IMR-90 (cell line): ENCODE measurements at regions of chr11 and their contacts with region 1.

Region 1: DNA sequence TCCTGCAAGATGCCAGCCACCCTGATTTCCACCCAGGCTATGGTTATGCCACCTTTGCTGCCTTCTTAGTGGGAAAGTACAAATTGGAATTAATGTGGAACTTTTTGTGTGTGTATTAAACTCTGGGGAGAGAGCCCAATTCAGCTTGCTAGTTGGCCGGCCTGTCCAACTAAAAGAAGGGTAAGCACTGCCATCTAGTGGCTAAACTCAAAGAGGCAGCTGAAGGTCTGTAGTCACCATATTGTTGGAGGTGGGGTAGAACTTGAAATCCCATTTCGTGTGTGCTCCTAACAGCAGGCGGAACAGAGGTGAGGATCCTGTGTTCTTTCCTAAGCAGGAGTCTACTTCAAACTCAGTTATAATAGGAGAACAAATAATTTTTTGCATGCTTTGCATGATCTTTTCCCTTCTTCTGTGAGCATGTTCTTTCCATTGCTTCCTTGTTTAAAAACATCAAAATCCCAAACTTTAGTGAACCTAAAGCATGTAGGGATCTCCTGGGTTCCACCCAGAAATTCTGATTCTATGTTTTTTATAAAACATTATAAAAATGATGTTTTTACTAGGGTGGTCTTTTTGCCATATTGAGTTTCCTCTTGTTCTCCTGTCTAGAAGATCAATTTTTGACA is 138.8 kb upstream of the SORL1-AS1 start:
- DNase-seq: peak; percentile 80
- ATAC-seq: peak; percentile 59
- H3K4me3 ChIP-seq: no peak overlapping the region
- H3K27ac ChIP-seq: no peak overlapping the region
- H3K4me1 ChIP-seq: peaks cover 17% of the 10 kb centered on the region
- H3K27me3 ChIP-seq: no peaks in the 10 kb centered on the region
- CTCF ChIP-seq: peak; percentile 93
- POLR2A ChIP-seq: peak; percentile 41; the same call in 1 of the 2 replicates
- RAD21 ChIP-seq: peak; percentile 96

Region 2: DNA sequence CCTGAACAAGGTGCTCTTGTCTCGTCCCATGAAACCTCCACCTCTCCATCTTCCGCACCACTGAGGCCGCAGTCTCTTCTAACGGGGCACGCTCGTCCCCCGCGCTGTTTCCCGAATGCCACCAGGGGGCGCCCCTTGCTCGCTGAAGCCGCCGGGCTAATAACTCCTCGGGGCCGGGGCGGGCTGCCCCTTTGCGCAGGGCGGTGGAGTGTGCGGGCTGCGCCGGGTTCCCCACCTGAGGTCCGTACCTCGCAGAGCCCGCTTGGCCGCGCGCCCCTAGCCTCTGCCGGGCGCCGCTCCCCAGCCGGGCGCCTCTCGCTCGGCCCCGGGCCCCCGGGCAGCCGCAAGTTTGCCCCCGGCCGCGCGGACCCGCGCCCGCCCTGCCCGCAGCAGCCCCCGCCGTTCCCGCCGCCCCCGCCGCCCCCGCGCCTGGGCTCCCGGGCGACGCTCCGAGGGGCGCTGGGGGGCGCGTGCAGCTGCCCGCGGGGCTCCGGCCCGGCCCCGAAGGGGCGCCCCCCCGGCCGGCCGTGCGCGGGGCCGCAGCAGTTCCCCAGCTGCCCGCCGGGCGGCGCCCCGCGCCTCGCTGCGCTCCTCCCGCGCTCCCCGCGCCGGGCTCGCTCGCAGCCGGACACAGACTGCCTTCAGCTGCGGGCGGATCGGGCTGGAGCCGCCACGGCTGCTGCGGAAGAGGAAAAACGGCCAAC is 1080.3 kb before region 1 on chr11 and contains the start of gene GRIK4:
- CTCF ChIA-PET with region 1: no interaction called
- POLR2A ChIA-PET with region 1: no interaction called
- dilution Hi-C with region 1: no loop called
- in situ Hi-C with region 1: no loop called
- intact Hi-C with region 1: loop called (anchors 2 kb)
- DNase-seq: peak; percentile 57
- ATAC-seq: peak; percentile 94
- H3K4me3 ChIP-seq: peak within 1 kb of the TSS; percentile 47
- H3K27ac ChIP-seq: no peak within 1 kb of the TSS
- H3K4me1 ChIP-seq: peaks cover 2% of the 10 kb centered on the region; the same call in 1 of the 2 replicates
- H3K27me3 ChIP-seq: peaks cover 4% of the 10 kb centered on the region
- CTCF ChIP-seq: peak; percentile 97
- POLR2A ChIP-seq: no peak
- RAD21 ChIP-seq: peak; percentile 97
- total RNA-seq, gene GRIK4: under 0.01 and 0.18 TPM in 2 replicates

Region 3: DNA sequence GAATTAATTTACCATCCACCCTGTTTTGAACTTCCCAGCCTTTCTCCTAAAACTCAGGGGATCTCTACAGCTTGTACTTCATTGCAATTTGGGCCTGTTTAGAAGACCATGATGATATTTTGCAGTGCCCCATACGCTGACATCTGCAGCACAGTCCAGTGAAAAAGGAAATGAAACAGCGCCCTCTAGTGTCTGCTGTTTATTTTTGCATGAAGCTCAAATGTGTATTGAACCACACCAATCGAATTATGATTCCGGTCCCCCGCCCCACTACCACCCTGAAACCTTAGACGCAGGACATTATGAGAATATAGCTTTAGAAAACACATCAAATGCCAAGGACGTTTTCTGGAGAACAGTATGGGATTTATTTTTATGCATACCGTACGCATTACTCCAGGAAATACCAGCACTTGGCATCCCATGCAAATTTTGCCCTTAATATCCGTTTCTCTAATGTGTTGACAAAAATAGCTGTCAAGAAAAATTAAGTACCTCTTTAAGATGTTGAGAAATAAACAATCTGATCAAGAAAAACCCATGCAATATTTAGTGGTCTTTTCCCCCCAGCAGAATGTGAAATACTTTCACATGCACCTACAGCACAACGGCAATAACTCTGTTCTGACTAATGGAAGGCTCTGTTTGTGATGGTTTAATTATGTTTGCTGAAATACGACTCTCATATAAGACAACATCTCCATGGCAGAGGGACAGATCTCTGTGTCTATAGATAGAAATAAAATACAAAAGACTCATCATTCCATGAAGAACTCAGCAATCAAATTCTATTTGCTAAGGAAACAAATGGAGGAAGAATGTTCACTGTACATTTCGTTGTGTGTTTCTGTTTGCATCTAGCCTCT is 396.6 kb before region 1 on chr11:
- CTCF ChIA-PET with region 1: no interaction called
- POLR2A ChIA-PET with region 1: no interaction called
- dilution Hi-C with region 1: no loop called
- in situ Hi-C with region 1: no loop called
- intact Hi-C with region 1: loop called (anchors 2 kb)
- DNase-seq: peak; percentile 64
- ATAC-seq: peak; percentile 98
- H3K4me3 ChIP-seq: no peak overlapping the region
- H3K27ac ChIP-seq: no peak overlapping the region
- H3K4me1 ChIP-seq: no peaks in the 10 kb centered on the region
- H3K27me3 ChIP-seq: peaks cover 15% of the 10 kb centered on the region
- CTCF ChIP-seq: peak; percentile 74
- POLR2A ChIP-seq: no peak
- RAD21 ChIP-seq: peak; percentile 72

Region 4: DNA sequence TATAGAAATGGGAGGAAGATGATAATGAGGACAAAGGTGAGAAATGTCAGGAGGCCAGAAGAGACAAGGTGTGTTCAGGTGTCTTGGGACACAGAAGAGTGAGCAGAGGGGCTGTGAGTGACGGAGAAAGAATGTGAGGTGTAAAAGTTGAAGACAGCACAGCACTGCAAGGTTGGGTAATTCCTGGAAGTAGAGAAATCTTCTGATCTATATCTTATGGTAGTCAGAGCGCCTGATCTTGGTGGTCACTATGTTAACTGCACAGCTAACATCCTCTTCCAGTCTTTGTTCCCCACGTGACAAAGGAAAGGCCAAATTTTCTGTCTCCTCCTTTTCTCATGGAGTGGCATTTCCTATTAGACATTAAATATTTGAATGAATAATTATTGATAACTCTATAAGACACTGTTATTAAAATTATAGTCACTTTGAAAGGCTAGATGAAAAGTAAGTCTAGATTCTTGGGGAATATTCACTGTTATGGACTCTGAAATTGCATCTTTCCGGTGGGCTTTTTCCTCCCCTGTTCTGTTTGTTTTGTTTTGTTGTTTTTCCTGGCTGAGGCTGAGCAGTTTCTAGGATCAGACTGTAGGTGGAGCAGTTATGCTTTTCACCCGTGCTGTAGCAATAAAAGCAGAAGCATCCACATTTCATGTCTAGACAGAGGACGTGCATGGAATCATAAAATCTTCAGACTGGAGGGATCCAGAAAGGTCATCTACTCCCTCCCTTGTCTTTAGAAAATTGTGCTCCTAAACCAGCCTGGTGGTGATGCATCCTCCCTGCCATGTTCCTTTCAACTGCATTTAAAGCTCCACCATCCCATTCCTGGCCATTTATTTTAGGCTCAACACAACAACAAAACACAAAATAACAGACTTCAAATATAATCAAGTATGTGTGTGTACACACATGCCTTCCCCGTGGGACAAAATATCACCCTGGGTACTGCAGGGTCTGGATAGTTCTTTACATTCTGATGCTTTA is 272.4 kb before region 1 on chr11:
- CTCF ChIA-PET with region 1: interaction called, 4 read pairs
- POLR2A ChIA-PET with region 1: interaction called, 3 read pairs
- dilution Hi-C with region 1: no loop called
- in situ Hi-C with region 1: no loop called
- intact Hi-C with region 1: loop called (anchors 1 kb)
- DNase-seq: peak; percentile 56
- ATAC-seq: peak; percentile 89
- H3K4me3 ChIP-seq: no peak overlapping the region
- H3K27ac ChIP-seq: no peak overlapping the region
- H3K4me1 ChIP-seq: no peaks in the 10 kb centered on the region
- H3K27me3 ChIP-seq: peaks cover 12% of the 10 kb centered on the region
- CTCF ChIP-seq: peak; percentile 73
- POLR2A ChIP-seq: no peak
- RAD21 ChIP-seq: peak; percentile 65

Region 5: DNA sequence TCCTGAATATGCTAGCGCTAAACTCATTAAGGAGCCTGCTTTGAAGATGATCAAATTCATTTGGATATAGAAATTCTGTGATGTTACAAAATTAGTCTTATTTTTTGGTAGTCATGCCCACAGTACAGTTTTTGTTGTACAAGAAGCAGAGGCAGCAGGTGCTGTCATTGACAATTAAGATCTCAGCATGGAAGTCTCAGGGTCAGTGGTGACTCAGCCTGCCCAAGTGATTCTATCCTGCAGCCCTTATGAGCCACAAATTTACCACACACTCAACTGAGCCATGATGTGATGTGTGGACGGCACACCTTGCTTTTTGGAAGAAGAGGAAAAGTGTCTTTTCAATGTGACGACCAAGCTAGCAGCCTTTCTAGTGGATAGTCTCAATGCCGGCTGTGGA is 14.8 kb after region 1 on chr11:
- CTCF ChIA-PET with region 1: no interaction called
- POLR2A ChIA-PET with region 1: interaction called, 33 read pairs
- dilution Hi-C with region 1: no loop called
- in situ Hi-C with region 1: no loop called
- intact Hi-C with region 1: no loop called
- DNase-seq: peak; percentile 23
- ATAC-seq: no peak
- H3K4me3 ChIP-seq: no peak overlapping the region
- H3K27ac ChIP-seq: no peak overlapping the region
- H3K4me1 ChIP-seq: peaks cover 4% of the 10 kb centered on the region; the same call in 1 of the 2 replicates
- H3K27me3 ChIP-seq: no peaks in the 10 kb centered on the region
- CTCF ChIP-seq: no peak
- POLR2A ChIP-seq: no peak
- RAD21 ChIP-seq: no peak

Region 6: DNA sequence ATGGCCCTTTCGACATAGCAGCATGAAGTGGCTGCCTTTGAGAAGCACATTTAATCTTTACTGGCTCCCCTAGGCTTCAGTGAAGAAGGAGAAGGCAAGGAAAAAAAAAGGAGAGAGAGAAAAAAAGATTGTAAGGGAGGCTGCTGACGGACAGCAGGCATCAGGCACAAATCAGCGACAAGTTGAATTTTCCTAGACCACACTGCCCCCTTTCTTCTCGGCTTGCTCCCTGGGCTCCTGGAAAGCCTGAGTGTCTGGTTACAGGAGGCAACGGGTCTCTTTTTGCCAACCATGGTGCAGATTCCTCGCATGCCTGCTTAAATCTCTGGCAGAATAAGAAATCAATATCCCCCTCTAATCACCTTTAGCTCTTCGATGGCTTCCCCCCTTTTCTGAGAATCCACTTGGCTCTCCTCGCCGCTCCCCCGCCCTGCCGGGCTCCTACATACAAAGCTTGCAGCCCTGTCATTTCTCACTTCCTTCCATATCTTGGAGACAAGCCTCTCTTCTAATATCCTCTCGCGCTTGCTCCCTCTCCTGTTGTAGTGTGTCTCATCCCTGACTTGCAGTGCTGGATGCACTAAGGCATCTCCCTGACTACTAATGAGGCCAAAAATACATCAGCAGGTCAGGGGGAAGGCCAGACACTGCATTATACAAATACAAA is 510.2 kb after region 1 on chr11:
- CTCF ChIA-PET with region 1: no interaction called
- POLR2A ChIA-PET with region 1: no interaction called
- dilution Hi-C with region 1: no loop called
- in situ Hi-C with region 1: no loop called
- intact Hi-C with region 1: loop called (anchors 5 kb)
- DNase-seq: peak; percentile 85
- ATAC-seq: peak; percentile 36
- H3K4me3 ChIP-seq: peak overlapping the region; percentile 91
- H3K27ac ChIP-seq: peak overlapping the region; percentile 95
- H3K4me1 ChIP-seq: peaks cover 11% of the 10 kb centered on the region
- H3K27me3 ChIP-seq: no peaks in the 10 kb centered on the region
- CTCF ChIP-seq: peak; percentile 55
- POLR2A ChIP-seq: peak; percentile 51
- RAD21 ChIP-seq: peak; percentile 61

Region 7: GRCh38 chr11:122505304-122506006 is 913.9 kb after region 1 on chr11:
- CTCF ChIA-PET with region 1: no interaction called
- POLR2A ChIA-PET with region 1: no interaction called
- dilution Hi-C with region 1: no loop called
- in situ Hi-C with region 1: no loop called
- intact Hi-C with region 1: loop called (anchors 2 kb)
- DNase-seq: peak; percentile 95
- ATAC-seq: peak; percentile 99
- H3K4me3 ChIP-seq: no peak overlapping the region
- H3K27ac ChIP-seq: peak overlapping the region; percentile 47
- H3K4me1 ChIP-seq: peaks cover 5% of the 10 kb centered on the region; the same call in 1 of the 2 replicates
- H3K27me3 ChIP-seq: no peaks in the 10 kb centered on the region
- CTCF ChIP-seq: peak; percentile 96
- POLR2A ChIP-seq: peak; percentile 41; the same call in 1 of the 2 replicates
- RAD21 ChIP-seq: peak; percentile 96